ENCODE measurements at regions of chr3 and their contacts with region 1.

Region 1: GRCh38 chr3:42190701-42191462 is 75.1 kb downstream of the CCK start:
- DNase-seq: peak; percentile 76
- ATAC-seq: peak; percentile 75
- H3K4me3 Mint-ChIP-seq: no peak overlapping the region
- H3K27ac Mint-ChIP-seq: peak overlapping the region; percentile 90; the same call in 1 of the 2 replicates
- H3K4me1 Mint-ChIP-seq: peaks cover 38% of the 10 kb centered on the region
- H3K27me3 Mint-ChIP-seq: no peaks in the 10 kb centered on the region
- CTCF ChIP-seq: peak; percentile 90

Region 2: GRCh38 chr3:42101048-42101447 is 89.8 kb before region 1 on chr3:
- CTCF ChIA-PET with region 1: interaction called, 13 read pairs
- POLR2A ChIA-PET with region 1: no interaction called
- DNase-seq: no peak
- ATAC-seq: no peak
- H3K4me3 Mint-ChIP-seq: no peak overlapping the region
- H3K27ac Mint-ChIP-seq: peak overlapping the region; percentile 26; the same call in 1 of the 2 replicates
- H3K4me1 Mint-ChIP-seq: peaks cover 35% of the 10 kb centered on the region
- H3K27me3 Mint-ChIP-seq: no peaks in the 10 kb centered on the region
- CTCF ChIP-seq: no peak; the same call in 1 of the 2 replicates

Region 3: DNA sequence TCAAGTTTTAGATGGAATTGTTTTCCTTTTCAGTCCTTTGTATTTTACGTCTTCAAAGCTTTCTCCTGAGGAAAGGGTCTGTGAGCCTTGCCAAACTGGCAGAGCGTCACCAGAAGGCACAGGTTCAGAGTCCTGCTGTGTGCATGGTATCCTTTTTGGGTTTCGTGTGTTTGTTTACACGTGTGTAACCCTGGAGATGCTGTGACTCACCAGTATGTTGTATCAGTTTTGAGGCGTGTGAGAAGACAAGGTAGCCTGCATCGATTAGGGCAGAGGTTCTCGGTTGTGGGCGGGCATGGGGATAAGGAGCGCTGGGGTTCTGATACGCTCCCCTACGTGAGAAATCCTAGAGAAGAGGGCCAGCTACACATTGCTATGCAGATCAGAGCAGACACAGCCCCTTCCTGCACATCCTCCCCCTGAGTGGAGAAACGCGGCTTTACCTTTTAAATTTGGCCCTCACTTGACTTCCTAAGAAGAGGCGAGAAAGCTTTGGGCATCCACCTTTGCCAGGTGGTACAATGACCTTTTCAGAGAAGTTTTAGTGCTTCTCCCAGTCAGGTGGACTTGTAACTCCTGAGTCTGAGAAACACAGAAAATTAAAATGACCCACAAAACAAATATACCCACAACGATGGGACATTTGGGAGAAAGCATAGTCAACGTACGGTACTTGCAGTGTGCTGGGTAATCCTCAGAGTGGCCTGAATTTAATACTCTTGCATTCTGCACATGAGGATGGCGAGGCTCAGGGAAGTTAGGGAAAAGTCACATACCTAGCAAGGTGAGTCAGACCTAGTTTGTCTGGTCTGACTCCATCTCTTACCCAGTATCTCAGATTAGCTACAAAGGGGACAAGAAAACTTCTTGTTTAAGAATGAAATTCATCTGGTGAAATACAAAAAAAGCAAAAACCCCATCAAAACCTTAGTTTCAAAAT is 61.6 kb before region 1 on chr3:
- CTCF ChIA-PET with region 1: interaction called, 28 read pairs
- POLR2A ChIA-PET with region 1: no interaction called
- DNase-seq: no peak
- ATAC-seq: no peak; the same call in 1 of the 2 replicates
- H3K4me3 Mint-ChIP-seq: no peak overlapping the region
- H3K27ac Mint-ChIP-seq: peak overlapping the region; percentile 69
- H3K4me1 Mint-ChIP-seq: peaks cover 3% of the 10 kb centered on the region
- H3K27me3 Mint-ChIP-seq: no peaks in the 10 kb centered on the region
- CTCF ChIP-seq: no peak

Region 4: GRCh38 chr3:42159706-42160472 is 31.0 kb before region 1 on chr3:
- CTCF ChIA-PET with region 1: interaction called, 35 read pairs
- POLR2A ChIA-PET with region 1: no interaction called
- DNase-seq: peak; percentile 86
- ATAC-seq: peak; percentile 92
- H3K4me3 Mint-ChIP-seq: peak overlapping the region; percentile 72
- H3K27ac Mint-ChIP-seq: peak overlapping the region; percentile 84
- H3K4me1 Mint-ChIP-seq: peaks cover 41% of the 10 kb centered on the region
- H3K27me3 Mint-ChIP-seq: no peaks in the 10 kb centered on the region
- CTCF ChIP-seq: no peak

Region 5: DNA sequence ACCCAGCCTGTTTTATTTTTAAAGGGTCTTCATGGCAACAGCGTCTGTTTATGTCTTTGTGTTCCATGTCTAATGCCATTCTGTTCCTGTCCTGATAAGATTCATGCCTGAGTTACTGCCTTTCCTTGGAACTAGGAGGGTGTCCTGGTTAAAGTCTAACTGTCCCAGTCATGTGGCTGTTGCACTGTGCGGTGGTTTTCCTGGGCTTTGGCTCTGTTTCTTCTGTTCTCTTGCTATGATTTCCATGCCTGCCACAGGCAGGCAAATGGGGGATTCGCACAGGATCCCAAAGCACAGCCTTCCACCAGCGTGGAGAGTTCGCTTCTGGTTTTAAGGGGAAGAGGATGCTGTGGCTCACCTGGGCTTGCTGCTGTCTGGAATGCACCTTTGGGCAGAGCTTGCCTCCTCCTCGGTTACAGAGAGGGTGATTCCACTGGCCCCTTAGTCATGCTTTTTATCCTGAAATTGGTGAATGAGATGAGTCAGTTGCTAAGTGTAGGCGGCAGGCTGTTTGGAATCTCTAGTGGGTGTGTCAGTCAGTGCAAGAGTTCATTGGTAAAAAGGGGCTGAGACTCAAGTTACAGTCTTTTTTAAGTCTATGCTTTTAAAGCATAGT is 11.7 kb before region 1 on chr3:
- CTCF ChIA-PET with region 1: interaction called, 81 read pairs
- POLR2A ChIA-PET with region 1: no interaction called
- DNase-seq: peak; percentile 29
- ATAC-seq: peak; percentile 75
- H3K4me3 Mint-ChIP-seq: no peak overlapping the region
- H3K27ac Mint-ChIP-seq: peak overlapping the region; percentile 95
- H3K4me1 Mint-ChIP-seq: peaks cover 28% of the 10 kb centered on the region
- H3K27me3 Mint-ChIP-seq: no peaks in the 10 kb centered on the region
- CTCF ChIP-seq: no peak

Region 6: GRCh38 chr3:42214565-42215283 is 23.8 kb after region 1 on chr3:
- CTCF ChIA-PET with region 1: interaction called, 17 read pairs
- POLR2A ChIA-PET with region 1: no interaction called
- DNase-seq: no peak
- ATAC-seq: no peak
- H3K4me3 Mint-ChIP-seq: no peak overlapping the region
- H3K27ac Mint-ChIP-seq: no peak overlapping the region
- H3K4me1 Mint-ChIP-seq: peaks cover 11% of the 10 kb centered on the region
- H3K27me3 Mint-ChIP-seq: no peaks in the 10 kb centered on the region
- CTCF ChIP-seq: no peak

Region 7: GRCh38 chr3:42290966-42291714 is 100.3 kb after region 1 on chr3:
- CTCF ChIA-PET with region 1: no interaction called
- POLR2A ChIA-PET with region 1: no interaction called
- DNase-seq: no peak
- ATAC-seq: no peak
- H3K4me3 Mint-ChIP-seq: no peak overlapping the region
- H3K27ac Mint-ChIP-seq: no peak overlapping the region
- H3K4me1 Mint-ChIP-seq: no peaks in the 10 kb centered on the region
- H3K27me3 Mint-ChIP-seq: peaks cover 17% of the 10 kb centered on the region
- CTCF ChIP-seq: no peak

Measured in WTC11 (cell line).